Prostate gland (tissue), 2 donors: ENCODE measurements at regions of chr3 and their contacts with region 1.

Region 1: GRCh38 chr3:53195602-53196574 is 34.9 kb downstream of the PRKCD start:
- DNase-seq: no peak
- H3K4me3 ChIP-seq: no peak overlapping the region
- H3K27ac ChIP-seq: no peak overlapping the region
- H3K4me1 ChIP-seq: no peaks in the 10 kb centered on the region
- H3K27me3 ChIP-seq: no peaks in the 10 kb centered on the region
- CTCF ChIP-seq: peak; percentile 96 to 100 (median 98)
- POLR2A ChIP-seq: no peak

Region 2: GRCh38 chr3:53114011-53114400 is 81.9 kb before region 1 on chr3:
- intact Hi-C with region 1: loop called (anchors 1 kb)
- DNase-seq: peak; percentile 84
- H3K4me3 ChIP-seq: no peak overlapping the region
- H3K27ac ChIP-seq: no peak overlapping the region
- H3K4me1 ChIP-seq: no peaks in the 10 kb centered on the region
- H3K27me3 ChIP-seq: no peaks in the 10 kb centered on the region
- CTCF ChIP-seq: peak; percentile 81 to 96 (median 94)
- POLR2A ChIP-seq: no peak

Region 3: DNA sequence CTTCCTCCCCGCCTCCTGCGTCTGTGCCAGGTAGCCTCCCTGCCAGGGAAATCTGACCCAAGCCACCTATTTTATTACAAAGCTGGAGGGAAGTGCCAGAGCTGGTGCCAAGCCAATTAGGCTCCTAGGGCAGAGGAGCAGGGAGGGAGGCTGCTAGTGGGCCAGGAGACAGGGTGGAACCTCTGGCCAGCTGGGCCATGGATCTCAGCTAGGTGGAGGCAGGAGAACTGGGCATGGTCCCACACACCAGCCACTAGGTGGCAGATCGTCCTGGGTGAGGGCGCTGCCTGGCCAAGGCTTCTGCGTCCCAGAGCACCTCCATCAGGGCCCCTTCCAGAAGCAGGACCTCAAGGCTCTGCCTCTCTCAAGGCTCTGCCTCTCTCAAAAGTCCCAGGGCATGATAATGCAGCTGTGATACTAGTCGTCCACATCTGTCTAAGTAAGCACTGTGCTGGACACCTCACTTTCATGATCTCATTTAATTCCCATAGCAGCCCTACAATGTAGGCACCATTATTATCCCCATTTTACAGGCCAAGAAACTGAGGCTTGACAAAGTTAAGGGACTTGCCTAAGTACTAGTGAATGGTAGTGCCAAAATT is 61.2 kb before region 1 on chr3:
- intact Hi-C with region 1: loop called (anchors 1 kb)
- DNase-seq: peak; percentile 93
- H3K4me3 ChIP-seq: no peak overlapping the region
- H3K27ac ChIP-seq: peak overlapping the region; percentile 38 to 65
- H3K4me1 ChIP-seq: peaks cover 17% of the 10 kb centered on the region
- H3K27me3 ChIP-seq: no peaks in the 10 kb centered on the region
- CTCF ChIP-seq: peak; percentile 56 to 97 (median 92)
- POLR2A ChIP-seq: no peak